Thyroid gland (tissue), 4 donors: ENCODE measurements at regions of chr3 and their contacts with region 1.

Region 1: DNA sequence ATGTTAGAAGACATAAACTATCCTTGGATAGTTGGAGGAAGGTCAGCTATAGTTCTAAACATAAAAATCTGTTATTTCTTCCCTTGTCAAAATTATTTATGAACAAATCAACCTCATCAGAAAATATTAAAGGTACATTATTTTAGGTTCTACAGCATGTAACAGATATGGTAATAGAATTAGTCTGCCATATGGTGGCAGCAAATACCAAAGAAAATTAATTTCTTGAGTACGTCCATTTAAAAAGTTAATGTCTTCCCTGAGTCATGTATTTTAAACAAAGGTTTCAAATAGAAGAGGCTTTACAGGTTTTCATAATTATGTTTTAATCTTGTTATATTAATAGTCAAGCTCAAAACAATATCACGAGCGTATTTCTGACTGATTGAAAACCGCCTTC is 17.9 kb upstream of the ANKRD28 start:
- DNase-seq: no peak
- H3K4me3 ChIP-seq: no peak overlapping the region
- H3K27ac ChIP-seq: no peak overlapping the region
- H3K4me1 ChIP-seq: peaks cover 4 to 5% of the 10 kb centered on the region in 2 donors
- H3K27me3 ChIP-seq: no peaks in the 10 kb centered on the region
- CTCF ChIP-seq: peak in 3 of 6 experiments; percentile 48 to 75 (median 69)
- POLR2A ChIP-seq: no peak

Region 2: GRCh38 chr3:15859507-15860013 is 43.9 kb after region 1 on chr3:
- intact Hi-C with region 1: no loop called
- DNase-seq: peak; percentile 90
- H3K4me3 ChIP-seq: peak overlapping the region; percentile 59 to 92 (median 68)
- H3K27ac ChIP-seq: peak overlapping the region; percentile 79 to 87 (median 81)
- H3K4me1 ChIP-seq: peaks cover 7 to 14% of the 10 kb centered on the region in 2 donors
- H3K27me3 ChIP-seq: no peaks in the 10 kb centered on the region
- CTCF ChIP-seq: peak in 2 of 6 experiments; percentile 26 to 27
- POLR2A ChIP-seq: peak in 1 of 2 donors; percentile 86

Region 3: DNA sequence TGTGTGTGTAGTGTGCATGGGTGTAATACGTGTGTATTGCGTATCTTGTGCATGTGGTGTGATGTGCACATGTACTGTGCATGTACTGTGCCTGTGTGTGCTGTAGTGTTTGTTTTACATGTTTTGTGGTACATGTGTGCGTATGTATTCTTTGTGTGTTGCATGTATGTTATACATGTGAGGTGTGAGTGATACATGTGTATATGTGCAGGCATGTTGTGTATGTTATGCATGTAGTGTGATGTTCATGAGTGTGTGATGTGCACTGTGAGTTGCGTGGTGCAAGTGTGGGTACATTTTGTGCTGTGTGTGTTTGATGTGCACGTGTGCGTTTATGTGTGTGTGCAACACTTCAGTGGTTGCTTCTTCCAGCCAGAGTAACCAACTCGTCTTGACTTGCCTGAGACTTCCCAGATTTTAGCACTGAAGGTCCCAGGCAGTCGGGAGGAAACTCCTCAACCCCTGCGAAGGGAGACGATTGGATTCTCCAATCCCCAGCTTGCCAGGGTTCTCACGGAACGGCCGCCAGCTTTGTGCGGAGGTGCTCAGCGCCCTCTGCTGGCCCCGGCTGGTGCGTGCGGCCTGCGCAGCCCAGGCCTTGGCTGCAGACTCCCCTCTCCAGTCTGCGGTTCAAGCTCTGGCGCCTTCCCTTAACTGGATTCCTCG is 362.4 kb after region 1 on chr3:
- intact Hi-C with region 1: loop called (anchors 10 kb)
- DNase-seq: peak; percentile 74 to 81
- H3K4me3 ChIP-seq: peak overlapping the region in 1 of 3 donors; percentile 27
- H3K27ac ChIP-seq: peak overlapping the region in 1 of 3 donors; percentile 30
- H3K4me1 ChIP-seq: peaks cover 4 to 16% of the 10 kb centered on the region in 2 donors
- H3K27me3 ChIP-seq: no peaks in the 10 kb centered on the region
- CTCF ChIP-seq: peak; percentile 75 to 96 (median 92)
- POLR2A ChIP-seq: peak in 1 of 2 donors; percentile 10

Region 4: DNA sequence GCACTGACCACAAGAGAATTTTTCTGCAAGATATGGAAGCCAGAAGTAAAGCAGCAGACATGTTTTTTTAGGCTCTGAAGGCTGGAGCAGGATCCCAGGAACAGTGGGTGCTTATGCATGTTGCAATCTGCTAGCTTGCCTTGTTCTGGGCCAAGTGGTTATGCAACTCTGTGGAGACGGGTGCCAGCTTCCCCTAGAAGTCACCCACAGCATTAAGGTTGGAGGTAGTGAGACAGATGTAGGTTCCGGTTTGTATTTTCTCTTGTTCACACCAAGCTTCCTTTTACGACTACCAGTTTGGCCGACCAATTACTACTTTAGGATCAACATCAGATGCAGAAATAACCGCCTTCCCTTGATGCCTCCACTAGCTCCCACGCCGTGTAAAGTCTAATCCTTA is 437.9 kb after region 1 on chr3:
- intact Hi-C with region 1: loop called (anchors 5 kb)
- DNase-seq: peak; percentile 39 to 64
- H3K4me3 ChIP-seq: no peak overlapping the region
- H3K27ac ChIP-seq: no peak overlapping the region
- H3K4me1 ChIP-seq: no peaks in the 10 kb centered on the region
- H3K27me3 ChIP-seq: no peaks in the 10 kb centered on the region
- CTCF ChIP-seq: no peak
- POLR2A ChIP-seq: no peak